Gastrocnemius medialis (tissue), 4 donors: ENCODE measurements at regions of chr19 and their contacts with region 1.

Region 1: GRCh38 chr19:8321060-8321985 is at the starts of genes NDUFA7 and RPS28:
- DNase-seq: peak; percentile 94 to 96
- ATAC-seq: peak; percentile 94 to 97
- H3K4me3 ChIP-seq: peak within 1 kb of the TSS; percentile 88 to 99 (median 94)
- H3K27ac ChIP-seq: peak within 1 kb of the TSS; percentile 93 to 99 (median 94)
- H3K4me1 ChIP-seq: peaks cover 23 to 30% of the 10 kb centered on the region in 2 donors
- H3K27me3 ChIP-seq: no peaks in the 10 kb centered on the region
- CTCF ChIP-seq: peak; percentile 27 to 61 (median 52)
- POLR2A ChIP-seq: peak; percentile 88 to 94
- total RNA-seq, gene NDUFA7: 75.3 to 129 (median 87.7) TPM
- total RNA-seq, gene RPS28: 248 to 436 (median 313) TPM

Region 2: DNA sequence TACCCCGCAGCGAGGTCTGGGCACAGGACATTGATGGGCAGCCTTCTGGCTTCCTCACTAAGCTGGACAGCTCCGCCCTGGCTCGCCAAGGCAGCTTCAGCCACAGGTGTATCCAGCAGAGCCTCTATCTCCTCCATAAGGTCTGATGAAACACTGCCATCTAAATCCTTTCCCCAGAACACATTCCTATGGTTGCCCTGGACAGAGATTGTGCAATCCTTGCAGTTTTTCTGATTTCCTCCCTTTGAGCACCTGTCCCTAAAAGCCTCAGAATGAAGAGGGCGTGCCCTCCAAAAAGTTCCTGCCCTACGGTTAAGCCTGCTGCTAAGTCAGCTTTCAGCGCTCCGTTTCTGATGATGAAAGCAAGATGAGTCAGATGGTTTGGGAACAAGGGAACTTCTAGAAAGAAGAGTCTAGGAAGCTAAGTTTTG is 537.3 kb before region 1 on chr19:
- in situ Hi-C with region 1: no loop called
- intact Hi-C with region 1: no loop called
- DNase-seq: no peak
- ATAC-seq: no peak
- H3K4me3 ChIP-seq: no peak overlapping the region
- H3K27ac ChIP-seq: no peak overlapping the region
- H3K4me1 ChIP-seq: no peaks in the 10 kb centered on the region
- H3K27me3 ChIP-seq: peaks cover 17 to 28% (median 23%) of the 10 kb centered on the region in 3 donors
- CTCF ChIP-seq: no peak
- POLR2A ChIP-seq: no peak

Region 3: DNA sequence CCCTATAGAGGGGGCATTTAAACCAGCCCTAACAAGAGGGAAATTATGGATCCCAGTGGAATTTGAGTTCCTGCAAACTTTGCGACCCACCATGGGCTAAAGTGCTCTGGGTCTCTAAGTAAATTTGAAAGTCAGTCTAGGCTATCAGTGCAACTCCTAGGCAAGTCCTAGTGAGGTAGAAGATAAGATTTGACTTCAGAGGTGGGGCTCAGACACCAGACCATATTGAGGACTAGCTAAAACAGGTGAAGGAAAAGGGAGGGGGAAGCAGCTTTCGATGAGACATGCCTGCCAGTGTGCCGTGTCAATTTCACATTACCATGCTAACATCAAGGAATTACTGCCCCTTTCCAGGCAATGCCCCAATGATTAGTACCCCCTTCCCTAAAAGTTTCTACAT is 51.6 kb before region 1 on chr19:
- in situ Hi-C with region 1: no loop called
- intact Hi-C with region 1: loop called (anchors 2 kb)
- DNase-seq: no peak
- ATAC-seq: no peak
- H3K4me3 ChIP-seq: no peak overlapping the region
- H3K27ac ChIP-seq: no peak overlapping the region
- H3K4me1 ChIP-seq: peaks cover 0 to 3% of the 10 kb centered on the region in 2 donors
- H3K27me3 ChIP-seq: no peaks in the 10 kb centered on the region
- CTCF ChIP-seq: no peak
- POLR2A ChIP-seq: no peak

Region 4: DNA sequence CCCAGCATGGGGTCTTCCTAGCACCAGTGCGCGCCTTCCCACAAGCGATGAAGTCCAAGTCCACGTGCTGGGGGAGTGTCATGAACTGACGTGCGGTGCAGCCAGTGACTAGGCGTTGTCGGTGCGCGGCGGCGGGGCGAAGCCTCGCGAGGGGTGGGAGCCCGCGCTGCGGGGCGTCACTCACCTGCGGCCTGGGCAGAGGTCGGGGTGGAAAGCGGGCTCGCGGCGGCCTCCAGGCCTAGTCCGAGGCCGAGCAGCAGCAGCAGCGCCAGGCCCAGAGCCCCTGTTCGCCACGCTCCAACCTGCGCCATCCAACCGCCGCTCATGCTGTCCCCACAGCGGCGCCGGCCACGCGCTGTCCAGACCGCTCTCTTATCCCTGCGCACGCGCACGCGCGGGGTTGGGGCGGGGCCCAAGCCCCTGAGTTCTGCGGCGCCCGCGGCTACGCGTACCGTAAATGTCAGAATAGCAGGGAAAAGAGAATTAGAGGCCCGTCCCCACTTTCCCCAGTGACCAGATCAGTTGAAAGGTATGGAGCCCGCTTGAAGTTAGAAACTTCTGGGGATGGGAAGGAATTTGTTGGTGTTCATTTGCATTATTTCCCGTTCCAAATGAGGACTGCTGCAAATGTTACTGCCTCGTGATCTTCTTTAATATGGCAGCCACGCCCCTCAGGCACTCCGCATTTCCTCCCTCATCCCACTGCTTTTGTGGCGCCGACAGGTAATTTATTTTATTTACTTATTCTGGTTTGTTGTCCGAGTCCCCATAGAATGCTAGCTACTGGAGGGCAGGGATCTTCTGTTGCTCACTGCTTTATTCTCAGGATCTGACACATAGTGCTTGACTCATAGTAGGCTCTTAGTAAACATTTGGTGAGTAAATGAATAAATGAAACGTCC is 13.1 kb before region 1 on chr19 and contains the start of gene CD320:
- in situ Hi-C with region 1: no loop called
- intact Hi-C with region 1: loop called (anchors 1 kb)
- DNase-seq: peak; percentile 74 to 84
- ATAC-seq: peak; percentile 92 to 93
- H3K4me3 ChIP-seq: peak within 1 kb of the TSS; percentile 62 to 76 (median 66)
- H3K27ac ChIP-seq: peak within 1 kb of the TSS; percentile 81 to 93 (median 84)
- H3K4me1 ChIP-seq: peaks cover 27 to 31% of the 10 kb centered on the region in 2 donors
- H3K27me3 ChIP-seq: no peaks in the 10 kb centered on the region
- CTCF ChIP-seq: peak in 1 of 5 experiments; percentile 14
- POLR2A ChIP-seq: peak; percentile 72 to 75
- total RNA-seq, gene CD320: 49.8 to 85.3 (median 66.1) TPM

Region 5: DNA sequence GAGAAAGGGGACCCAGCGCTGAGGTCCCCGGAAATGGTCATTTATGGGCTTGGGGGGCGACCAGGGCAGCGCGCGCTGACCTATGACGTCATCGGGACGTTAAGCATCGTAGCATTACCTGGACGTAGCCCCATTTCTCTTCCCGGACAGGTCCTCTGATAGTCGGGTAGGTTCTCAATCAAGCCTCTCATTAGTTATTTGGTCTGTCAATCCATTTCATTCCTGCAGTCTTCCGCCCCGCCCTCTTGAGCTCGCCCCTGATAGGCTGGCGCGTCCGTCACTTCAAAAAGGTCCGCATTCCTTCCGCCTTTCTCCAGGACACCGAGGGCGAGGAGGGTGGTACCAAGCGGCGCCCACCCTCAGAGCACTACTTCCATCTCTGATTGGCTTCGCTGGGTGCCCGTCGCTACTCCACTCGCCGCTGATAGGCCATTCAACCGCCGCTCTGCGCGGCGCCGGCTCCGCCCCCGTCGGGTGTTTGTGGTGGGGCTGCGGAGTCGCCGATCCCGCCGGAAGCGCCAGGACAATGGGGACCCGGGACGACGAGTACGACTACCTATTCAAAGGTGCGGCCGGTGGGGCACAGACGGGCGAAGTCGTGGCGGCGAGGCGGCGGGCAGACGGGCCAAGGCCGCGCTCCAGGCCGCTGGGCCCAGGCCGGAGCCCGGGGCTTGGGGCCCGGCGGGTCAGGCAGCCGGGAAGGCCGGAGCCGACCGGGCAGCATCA is 68.7 kb after region 1 on chr19 and contains the start of gene RAB11B:
- in situ Hi-C with region 1: no loop called
- intact Hi-C with region 1: loop called (anchors 1 kb)
- DNase-seq: peak; percentile 99 to 100
- ATAC-seq: peak; percentile 85 to 88
- H3K4me3 ChIP-seq: peak within 1 kb of the TSS; percentile 68 to 100 (median 72)
- H3K27ac ChIP-seq: peak within 1 kb of the TSS; percentile 96 to 100 (median 100)
- H3K4me1 ChIP-seq: peaks cover 46 to 53% of the 10 kb centered on the region in 2 donors
- H3K27me3 ChIP-seq: no peaks in the 10 kb centered on the region
- CTCF ChIP-seq: no peak
- POLR2A ChIP-seq: peak; percentile 69 to 79
- total RNA-seq, gene RAB11B: 13.4 to 42.9 (median 31.0) TPM

Region 6: GRCh38 chr19:8423817-8424223 is 102.5 kb after region 1 on chr19:
- in situ Hi-C with region 1: no loop called
- intact Hi-C with region 1: no loop called
- DNase-seq: peak; percentile 74 to 87
- ATAC-seq: peak; percentile 98
- H3K4me3 ChIP-seq: peak overlapping the region in 2 of 4 donors; percentile 3 to 17
- H3K27ac ChIP-seq: peak overlapping the region; percentile 74 to 78 (median 75)
- H3K4me1 ChIP-seq: peaks cover 15 to 16% of the 10 kb centered on the region in 2 donors
- H3K27me3 ChIP-seq: no peaks in the 10 kb centered on the region
- CTCF ChIP-seq: no peak
- POLR2A ChIP-seq: peak in 1 of 2 donors; percentile 30

Region 7: GRCh38 chr19:8580710-8581281 is 259.5 kb after region 1 on chr19:
- in situ Hi-C with region 1: no loop called
- intact Hi-C with region 1: no loop called
- DNase-seq: peak; percentile 37 to 50
- ATAC-seq: peak in 1 of 2 donors; percentile 41
- H3K4me3 ChIP-seq: no peak overlapping the region
- H3K27ac ChIP-seq: no peak overlapping the region
- H3K4me1 ChIP-seq: no peaks in the 10 kb centered on the region
- H3K27me3 ChIP-seq: peaks cover 0 to 14% (median 11%) of the 10 kb centered on the region in 3 donors
- CTCF ChIP-seq: peak; percentile 70 to 90 (median 82)
- POLR2A ChIP-seq: no peak